Endothelial cell of umbilical vein (primary cell): ENCODE measurements at regions of chr4 and their contacts with region 1.

Region 1: GRCh38 chr4:124334119-124334518 is 378.4 kb downstream of the ANKRD50 start:
- DNase-seq: peak; percentile 88
- H3K4me3 ChIP-seq: no peak overlapping the region
- H3K27ac ChIP-seq: peak overlapping the region; percentile 75
- H3K4me1 ChIP-seq: peaks cover 7% of the 10 kb centered on the region
- H3K27me3 ChIP-seq: no peaks in the 10 kb centered on the region
- CTCF ChIP-seq: peak; percentile 30 to 45
- POLR2A ChIP-seq: no peak

Region 2: GRCh38 chr4:124288706-124289483 is 45.2 kb before region 1 on chr4:
- CTCF ChIA-PET with region 1: no interaction called
- POLR2A ChIA-PET with region 1: no interaction called
- dilution Hi-C with region 1: no loop called
- intact Hi-C with region 1: no loop called
- DNase-seq: no peak
- H3K4me3 ChIP-seq: no peak overlapping the region
- H3K27ac ChIP-seq: no peak overlapping the region
- H3K4me1 ChIP-seq: no peaks in the 10 kb centered on the region
- H3K27me3 ChIP-seq: no peaks in the 10 kb centered on the region
- CTCF ChIP-seq: no peak
- POLR2A ChIP-seq: no peak

Region 3: DNA sequence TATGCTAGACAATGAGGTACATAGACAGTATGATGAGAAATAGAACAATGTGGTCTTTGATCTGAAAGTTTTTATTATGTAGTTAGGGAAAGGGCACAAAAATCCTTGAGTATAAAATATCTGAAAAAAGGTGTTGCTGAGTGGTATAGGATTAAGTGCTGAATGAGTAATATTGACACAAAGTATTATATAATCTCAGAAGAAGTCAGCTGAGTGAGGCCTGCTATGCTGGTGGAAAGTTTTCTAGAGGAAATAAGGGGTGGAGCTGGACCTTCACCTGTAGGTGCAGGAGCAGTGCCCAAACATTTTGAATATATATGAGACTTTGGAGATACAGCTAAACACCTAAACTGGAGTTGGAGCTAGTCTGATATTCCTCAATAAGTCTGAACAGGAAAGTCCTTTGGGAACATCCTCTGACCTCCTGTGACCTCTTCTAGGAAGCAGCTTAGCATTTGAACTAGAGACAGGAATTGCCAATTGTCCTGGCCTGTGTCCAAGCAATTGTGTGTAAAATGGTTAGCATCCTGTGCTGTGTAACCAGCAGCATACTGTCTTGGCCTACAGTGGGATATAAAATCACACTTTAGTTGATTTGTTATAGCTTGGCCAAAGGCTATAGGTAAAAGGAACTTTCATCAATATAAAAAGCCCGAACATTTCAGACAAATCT is 93.1 kb after region 1 on chr4:
- CTCF ChIA-PET with region 1: interaction called, 39 read pairs
- POLR2A ChIA-PET with region 1: interaction called, 9 read pairs
- dilution Hi-C with region 1: no loop called
- intact Hi-C with region 1: loop called (anchors 1 kb)
- DNase-seq: peak; percentile 72
- H3K4me3 ChIP-seq: no peak overlapping the region
- H3K27ac ChIP-seq: peak overlapping the region; percentile 100
- H3K4me1 ChIP-seq: peaks cover 68% of the 10 kb centered on the region
- H3K27me3 ChIP-seq: no peaks in the 10 kb centered on the region
- CTCF ChIP-seq: no peak
- POLR2A ChIP-seq: no peak

Region 4: GRCh38 chr4:124526331-124526730 is 192.2 kb after region 1 on chr4:
- CTCF ChIA-PET with region 1: interaction called, 4 read pairs
- POLR2A ChIA-PET with region 1: no interaction called
- dilution Hi-C with region 1: no loop called
- intact Hi-C with region 1: loop called (anchors 2 kb)
- DNase-seq: peak; percentile 83
- H3K4me3 ChIP-seq: no peak overlapping the region
- H3K27ac ChIP-seq: peak overlapping the region; percentile 64
- H3K4me1 ChIP-seq: peaks cover 19% of the 10 kb centered on the region
- H3K27me3 ChIP-seq: no peaks in the 10 kb centered on the region
- CTCF ChIP-seq: no peak
- POLR2A ChIP-seq: no peak

Region 5: DNA sequence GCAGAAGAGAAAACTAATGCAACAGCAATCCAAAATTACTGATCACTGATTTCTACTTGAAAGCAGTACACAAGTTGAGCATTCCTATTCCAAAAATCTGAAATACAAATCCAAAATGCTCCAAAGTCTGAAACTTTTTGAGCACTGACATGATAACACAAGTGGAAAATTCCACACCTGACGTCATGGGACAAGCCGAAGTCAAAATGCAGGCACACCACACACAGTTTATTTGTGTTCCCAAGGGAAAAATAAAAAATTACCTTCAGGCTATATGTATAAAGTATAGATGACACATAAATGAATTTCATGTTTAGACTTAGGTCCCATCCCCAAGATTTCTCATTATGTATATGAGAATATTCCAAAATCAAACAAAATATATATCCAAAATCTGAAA is 357.7 kb after region 1 on chr4:
- CTCF ChIA-PET with region 1: interaction called, 10 read pairs
- POLR2A ChIA-PET with region 1: no interaction called
- dilution Hi-C with region 1: no loop called
- intact Hi-C with region 1: no loop called
- DNase-seq: no peak
- H3K4me3 ChIP-seq: no peak overlapping the region
- H3K27ac ChIP-seq: no peak overlapping the region
- H3K4me1 ChIP-seq: peaks cover 34% of the 10 kb centered on the region
- H3K27me3 ChIP-seq: no peaks in the 10 kb centered on the region
- CTCF ChIP-seq: no peak
- POLR2A ChIP-seq: no peak

Region 6: GRCh38 chr4:124940387-124940786 is 606.3 kb after region 1 on chr4:
- CTCF ChIA-PET with region 1: interaction called, 3 read pairs
- POLR2A ChIA-PET with region 1: no interaction called
- dilution Hi-C with region 1: no loop called
- intact Hi-C with region 1: loop called (anchors 5 kb)
- DNase-seq: peak; percentile 97
- H3K4me3 ChIP-seq: no peak overlapping the region
- H3K27ac ChIP-seq: peak overlapping the region; percentile 98
- H3K4me1 ChIP-seq: peaks cover 38% of the 10 kb centered on the region
- H3K27me3 ChIP-seq: no peaks in the 10 kb centered on the region
- CTCF ChIP-seq: no peak
- POLR2A ChIP-seq: peak; percentile 29